SK-N-SH (cell line): ENCODE measurements at regions of chr2 and their contacts with region 1.

Region 1: DNA sequence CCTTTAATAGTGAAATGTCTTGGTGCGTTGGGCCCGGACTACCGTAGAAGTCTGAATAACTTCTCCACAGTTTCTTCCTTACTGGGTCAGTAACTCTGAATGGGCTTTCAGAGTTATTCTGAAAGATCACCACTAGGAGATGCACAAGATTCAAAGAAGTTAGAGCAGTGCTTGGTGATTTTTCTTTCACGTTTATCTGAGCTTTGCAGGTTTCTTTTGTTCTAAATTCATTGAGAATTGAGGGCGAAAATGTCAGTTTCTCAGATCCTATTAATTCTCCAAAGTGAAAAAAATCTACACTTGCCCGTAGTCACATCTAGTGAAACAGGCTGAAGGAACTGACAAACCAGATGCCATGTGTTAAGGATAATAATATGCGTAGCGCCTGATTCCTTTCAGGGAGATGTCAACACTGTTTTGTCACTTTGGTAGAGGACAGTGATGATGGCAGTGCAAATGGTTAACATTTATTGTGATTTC is 70.1 kb downstream of the QPCT start:
- DNase-seq: peak; percentile 72
- H3K4me3 ChIP-seq: no peak overlapping the region; a peak in 1 of 4 replicates
- H3K27ac ChIP-seq: peak overlapping the region; percentile 42 to 87; a peak in 3 of 4 replicates
- H3K4me1 ChIP-seq: peaks cover 10 to 16% of the 10 kb centered on the region in 2 experiments
- H3K27me3 ChIP-seq: no peaks in the 10 kb centered on the region
- CTCF ChIP-seq: peak; percentile 99
- EP300 ChIP-seq: 0 out of 4 replicates have a peak, but pooled peaks of 1 of the 2 experiments have one; percentile 36
- RAD21 ChIP-seq: peak; percentile 100

Region 2: GRCh38 chr2:37287966-37288365 is 126.5 kb before region 1 on chr2:
- CTCF ChIA-PET with region 1: interaction called, 17 read pairs
- POLR2A ChIA-PET with region 1: no interaction called
- DNase-seq: peak; percentile 46
- H3K4me3 ChIP-seq: no peak overlapping the region
- H3K27ac ChIP-seq: peak overlapping the region in 1 of 2 experiments; percentile 51; a peak in 1 of 4 replicates
- H3K4me1 ChIP-seq: peaks cover 8 to 11% of the 10 kb centered on the region in 2 experiments
- H3K27me3 ChIP-seq: no peaks in the 10 kb centered on the region
- CTCF ChIP-seq: peak; percentile 43
- EP300 ChIP-seq: no peak
- RAD21 ChIP-seq: peak; percentile 86

Region 3: GRCh38 chr2:37357530-37357929 is 57.0 kb before region 1 on chr2:
- CTCF ChIA-PET with region 1: no interaction called
- POLR2A ChIA-PET with region 1: no interaction called
- DNase-seq: no peak
- H3K4me3 ChIP-seq: no peak overlapping the region
- H3K27ac ChIP-seq: peak overlapping the region in 1 of 2 experiments; percentile 73; a peak in 2 of 4 replicates
- H3K4me1 ChIP-seq: peaks cover 0 to 26% of the 10 kb centered on the region in 2 experiments; a peak in 2 of 4 replicates
- H3K27me3 ChIP-seq: no peaks in the 10 kb centered on the region
- CTCF ChIP-seq: no peak
- EP300 ChIP-seq: no peak
- RAD21 ChIP-seq: no peak

Region 4: DNA sequence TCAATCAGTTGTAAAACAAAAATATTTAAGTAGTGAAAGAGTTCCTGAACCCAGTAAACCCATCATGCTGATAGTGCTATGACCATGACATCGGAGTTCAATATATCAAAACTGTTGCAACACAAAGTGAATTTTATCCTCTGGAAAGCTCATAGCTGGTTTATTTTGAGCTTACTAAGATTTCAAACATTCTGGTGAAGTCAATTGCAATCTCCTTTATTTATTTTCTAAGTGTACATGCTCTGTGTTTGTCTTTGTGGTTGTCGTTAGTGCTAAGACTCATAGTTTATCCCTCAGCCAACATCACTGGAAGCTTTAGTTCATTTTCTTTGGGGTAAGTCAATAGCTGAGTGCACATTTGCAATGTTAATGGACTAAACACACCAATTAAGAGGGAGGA is 21.8 kb after region 1 on chr2:
- CTCF ChIA-PET with region 1: interaction called, 21 read pairs
- POLR2A ChIA-PET with region 1: no interaction called
- DNase-seq: no peak
- H3K4me3 ChIP-seq: no peak overlapping the region
- H3K27ac ChIP-seq: no peak overlapping the region
- H3K4me1 ChIP-seq: no peaks in the 10 kb centered on the region; a peak in 1 of 4 replicates
- H3K27me3 ChIP-seq: no peaks in the 10 kb centered on the region
- CTCF ChIP-seq: no peak
- EP300 ChIP-seq: no peak
- RAD21 ChIP-seq: no peak

Region 5: GRCh38 chr2:37619959-37620300 is 205.4 kb after region 1 on chr2:
- CTCF ChIA-PET with region 1: interaction called, 11 read pairs
- POLR2A ChIA-PET with region 1: no interaction called
- DNase-seq: no peak
- H3K4me3 ChIP-seq: no peak overlapping the region
- H3K27ac ChIP-seq: no peak overlapping the region
- H3K4me1 ChIP-seq: peaks cover 0 to 4% of the 10 kb centered on the region in 2 experiments; a peak in 1 of 4 replicates
- H3K27me3 ChIP-seq: no peaks in the 10 kb centered on the region
- CTCF ChIP-seq: no peak
- EP300 ChIP-seq: no peak
- RAD21 ChIP-seq: no peak

Region 6: DNA sequence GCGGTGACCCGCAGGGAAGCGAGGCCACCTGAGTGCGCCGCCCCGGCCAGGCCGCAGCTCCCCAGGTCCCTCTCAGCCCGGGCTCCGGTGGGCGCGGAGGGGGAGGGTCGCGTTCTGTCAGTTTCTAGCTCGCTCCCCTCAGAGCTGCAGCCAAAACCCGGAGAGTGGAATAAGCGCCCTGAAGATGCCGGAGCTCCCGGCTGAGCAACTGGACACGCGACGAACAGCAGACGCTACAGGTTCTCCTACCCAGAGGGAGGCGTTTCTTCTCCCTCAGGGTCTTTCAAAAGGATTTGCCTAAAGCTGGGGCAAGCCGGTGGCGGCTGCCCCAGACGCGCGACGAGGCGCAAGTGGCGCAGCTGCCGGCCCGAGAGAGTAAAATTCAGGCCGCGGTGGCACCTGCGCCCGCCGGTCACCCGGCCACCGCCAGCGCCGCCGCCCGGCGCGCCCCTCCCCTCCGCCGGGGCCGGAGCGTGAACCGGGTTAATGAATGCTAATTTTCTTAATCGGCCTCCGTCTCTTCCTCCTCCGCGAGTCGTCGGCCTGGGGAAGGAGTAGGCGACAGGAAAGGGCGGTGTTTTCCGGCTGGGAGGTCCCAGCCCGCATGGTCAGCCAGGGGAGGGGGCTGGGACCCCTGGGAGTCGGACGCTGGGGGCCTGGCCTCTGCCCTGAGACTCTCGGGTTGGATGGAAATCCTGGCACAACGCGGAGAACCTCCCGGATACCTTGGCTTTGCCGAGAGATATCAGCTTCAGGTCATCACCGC is 257.8 kb after region 1 on chr2:
- CTCF ChIA-PET with region 1: interaction called, 55 read pairs
- POLR2A ChIA-PET with region 1: interaction called, 42 read pairs
- DNase-seq: peak; percentile 98
- H3K4me3 ChIP-seq: peak overlapping the region; percentile 80 to 100
- H3K27ac ChIP-seq: peak overlapping the region; percentile 86 to 99
- H3K4me1 ChIP-seq: peaks cover 21 to 26% of the 10 kb centered on the region in 2 experiments
- H3K27me3 ChIP-seq: no peaks in the 10 kb centered on the region
- CTCF ChIP-seq: peak; percentile 10; the same call in 1 of the 2 replicates
- EP300 ChIP-seq: peak in 1 of 2 experiments; percentile 58; a peak in 2 of 4 replicates
- RAD21 ChIP-seq: peak; percentile 42

Region 7: GRCh38 chr2:37865640-37866039 is 451.1 kb after region 1 on chr2:
- CTCF ChIA-PET with region 1: interaction called, 41 read pairs
- POLR2A ChIA-PET with region 1: no interaction called
- DNase-seq: no peak
- H3K4me3 ChIP-seq: no peak overlapping the region
- H3K27ac ChIP-seq: no peak overlapping the region
- H3K4me1 ChIP-seq: peaks cover 2 to 20% of the 10 kb centered on the region in 2 experiments; a peak in 2 of 4 replicates
- H3K27me3 ChIP-seq: no peaks in the 10 kb centered on the region
- CTCF ChIP-seq: no peak
- EP300 ChIP-seq: no peak
- RAD21 ChIP-seq: no peak